Activated B cell treated with CpG ODN at 0.5 μM for 24 hours (primary cell): ENCODE measurements at regions of chr7 and their contacts with region 1.

Region 1: DNA sequence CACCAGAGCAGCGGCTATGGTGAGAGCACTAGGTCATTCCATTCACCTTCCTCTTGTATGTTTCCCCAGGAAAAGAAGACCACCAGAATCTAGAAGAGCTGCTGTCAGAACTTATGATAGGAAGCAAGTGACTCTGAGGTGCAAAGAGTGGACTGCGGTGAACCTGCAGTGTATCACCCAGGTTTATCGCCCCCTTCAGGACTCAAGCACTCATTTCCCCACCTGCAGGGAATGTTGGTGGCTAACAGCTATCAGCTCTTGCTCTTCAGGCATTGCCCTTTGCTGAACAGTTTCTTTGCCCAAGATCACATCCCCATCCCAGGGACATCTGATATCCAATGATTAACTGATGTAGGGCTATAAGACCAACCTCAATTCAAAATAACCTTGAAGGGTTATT is 66.3 kb upstream of the IL6 start:
- DNase-seq: no peak
- ATAC-seq: no peak
- H3K4me3 Mint-ChIP-seq: peak overlapping the region; percentile 80
- H3K27ac Mint-ChIP-seq: peak overlapping the region; percentile 95
- H3K4me1 Mint-ChIP-seq: peaks cover 88% of the 10 kb centered on the region
- H3K27me3 Mint-ChIP-seq: no peaks in the 10 kb centered on the region
- CTCF ChIP-seq: no peak

Region 2: GRCh38 chr7:22559829-22560489 is 100.8 kb before region 1 on chr7:
- CTCF ChIA-PET with region 1: interaction called, 75 read pairs
- POLR2A ChIA-PET with region 1: interaction called, 93 read pairs
- intact Hi-C with region 1: loop called (anchors 1 kb)
- DNase-seq: peak; percentile 43
- ATAC-seq: peak; percentile 80
- H3K4me3 Mint-ChIP-seq: peak overlapping the region; percentile 36
- H3K27ac Mint-ChIP-seq: peak overlapping the region; percentile 70
- H3K4me1 Mint-ChIP-seq: peaks cover 50% of the 10 kb centered on the region
- H3K27me3 Mint-ChIP-seq: no peaks in the 10 kb centered on the region
- CTCF ChIP-seq: peak; percentile 24

Region 3: DNA sequence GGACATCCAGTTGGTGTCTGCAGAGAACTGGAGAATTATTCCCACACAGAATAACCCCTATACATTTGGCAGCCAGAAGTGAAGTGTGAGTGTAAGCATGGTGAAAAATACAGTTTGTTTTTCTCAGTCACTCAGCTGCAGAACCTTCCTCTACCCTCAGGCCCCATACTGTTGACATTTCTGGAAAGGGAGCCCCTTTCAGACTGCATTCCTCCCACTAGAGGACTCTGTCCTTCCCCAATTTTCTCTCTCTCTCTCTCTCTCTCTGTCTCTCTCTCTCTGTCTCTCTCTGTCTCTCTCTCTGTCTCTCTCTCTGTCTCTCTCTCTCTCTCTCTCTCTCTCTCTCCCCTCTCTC is 74.0 kb before region 1 on chr7:
- CTCF ChIA-PET with region 1: interaction called, 6 read pairs
- POLR2A ChIA-PET with region 1: interaction called, 5 read pairs
- intact Hi-C with region 1: loop called (anchors 1 kb)
- DNase-seq: no peak
- ATAC-seq: no peak
- H3K4me3 Mint-ChIP-seq: peak overlapping the region; percentile 67
- H3K27ac Mint-ChIP-seq: peak overlapping the region; percentile 87
- H3K4me1 Mint-ChIP-seq: peaks cover 65% of the 10 kb centered on the region
- H3K27me3 Mint-ChIP-seq: no peaks in the 10 kb centered on the region
- CTCF ChIP-seq: no peak

Region 4: GRCh38 chr7:22697876-22698606 is 37.3 kb after region 1 on chr7:
- CTCF ChIA-PET with region 1: interaction called, 14 read pairs
- POLR2A ChIA-PET with region 1: interaction called, 95 read pairs
- intact Hi-C with region 1: loop called (anchors 1 kb)
- DNase-seq: no peak
- ATAC-seq: peak; percentile 74
- H3K4me3 Mint-ChIP-seq: peak overlapping the region; percentile 61
- H3K27ac Mint-ChIP-seq: peak overlapping the region; percentile 89
- H3K4me1 Mint-ChIP-seq: peaks cover 93% of the 10 kb centered on the region
- H3K27me3 Mint-ChIP-seq: no peaks in the 10 kb centered on the region
- CTCF ChIP-seq: no peak

Region 5: DNA sequence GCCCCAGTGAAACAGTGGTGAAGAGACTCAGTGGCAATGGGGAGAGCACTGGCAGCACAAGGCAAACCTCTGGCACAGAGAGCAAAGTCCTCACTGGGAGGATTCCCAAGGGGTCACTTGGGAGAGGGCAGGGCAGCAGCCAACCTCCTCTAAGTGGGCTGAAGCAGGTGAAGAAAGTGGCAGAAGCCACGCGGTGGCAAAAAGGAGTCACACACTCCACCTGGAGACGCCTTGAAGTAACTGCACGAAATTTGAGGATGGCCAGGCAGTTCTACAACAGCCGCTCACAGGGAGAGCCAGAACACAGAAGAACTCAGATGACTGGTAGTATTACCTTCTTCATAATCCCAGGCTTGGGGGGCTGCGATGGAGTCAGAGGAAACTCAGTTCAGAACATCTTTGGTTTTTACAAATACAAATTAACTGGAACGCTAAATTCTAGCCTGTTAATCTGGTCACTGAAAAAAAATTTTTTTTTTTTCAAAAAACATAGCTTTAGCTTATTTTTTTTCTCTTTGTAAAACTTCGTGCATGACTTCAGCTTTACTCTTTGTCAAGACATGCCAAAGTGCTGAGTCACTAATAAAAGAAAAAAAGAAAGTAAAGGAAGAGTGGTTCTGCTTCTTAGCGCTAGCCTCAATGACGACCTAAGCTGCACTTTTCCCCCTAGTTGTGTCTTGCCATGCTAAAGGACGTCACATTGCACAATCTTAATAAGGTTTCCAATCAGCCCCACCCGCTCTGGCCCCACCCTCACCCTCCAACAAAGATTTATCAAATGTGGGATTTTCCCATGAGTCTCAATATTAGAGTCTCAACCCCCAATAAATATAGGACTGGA is 65.8 kb after region 1 on chr7:
- CTCF ChIA-PET with region 1: interaction called, 110 read pairs
- POLR2A ChIA-PET with region 1: interaction called, 215 read pairs
- intact Hi-C with region 1: loop called (anchors 1 kb)
- DNase-seq: peak; percentile 47
- ATAC-seq: peak; percentile 69
- H3K4me3 Mint-ChIP-seq: peak overlapping the region; percentile 94
- H3K27ac Mint-ChIP-seq: peak overlapping the region; percentile 94
- H3K4me1 Mint-ChIP-seq: peaks cover 88% of the 10 kb centered on the region
- H3K27me3 Mint-ChIP-seq: no peaks in the 10 kb centered on the region
- CTCF ChIP-seq: no peak

Region 6: DNA sequence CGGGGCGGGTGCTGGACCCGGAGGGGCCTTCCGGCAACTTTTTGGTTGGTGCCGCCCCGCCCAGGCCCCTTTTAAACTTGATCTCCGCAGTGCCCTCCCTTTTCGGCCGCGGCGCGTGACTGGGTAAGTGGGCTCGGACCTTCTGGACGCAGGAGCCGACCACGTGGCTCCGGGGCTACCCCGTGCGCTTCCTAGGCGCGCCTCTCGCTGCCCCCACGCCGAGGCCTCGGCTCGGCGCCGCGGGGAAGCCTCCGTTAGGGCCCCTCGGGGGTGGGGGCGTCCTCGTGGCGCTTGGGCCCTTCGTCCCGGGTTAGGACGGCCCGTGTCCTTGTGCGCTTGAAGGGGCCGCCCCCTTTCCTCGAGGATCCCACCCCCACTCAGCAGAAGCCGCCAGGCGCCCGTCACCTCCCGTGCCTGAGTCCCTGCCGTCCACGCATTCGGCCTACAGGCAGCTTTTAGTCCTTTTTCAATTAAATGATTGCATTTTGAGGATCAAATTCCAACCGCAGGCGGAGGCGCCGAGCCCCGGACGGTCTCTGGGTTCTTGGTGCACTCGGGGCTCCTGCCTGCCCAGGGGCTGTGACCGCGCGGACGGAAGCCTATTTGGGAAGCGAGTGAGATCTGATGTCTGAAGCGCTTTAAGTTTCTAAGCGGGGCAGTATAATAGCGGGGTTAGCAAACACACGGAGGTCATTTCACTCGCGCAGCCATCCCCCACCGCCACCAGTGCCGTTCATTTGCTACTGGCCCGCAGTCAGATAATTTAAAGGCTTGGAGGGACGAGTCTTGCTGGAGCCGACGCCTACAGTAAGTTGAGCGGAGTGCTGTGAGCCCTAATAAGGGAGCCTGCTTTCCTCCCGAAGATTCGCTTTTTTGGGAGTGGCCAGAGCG is 193.7 kb after region 1 on chr7:
- CTCF ChIA-PET with region 1: no interaction called
- POLR2A ChIA-PET with region 1: interaction called, 3 read pairs
- intact Hi-C with region 1: loop called (anchors 10 kb)
- DNase-seq: peak; percentile 84
- ATAC-seq: peak; percentile 81
- H3K4me3 Mint-ChIP-seq: peak overlapping the region; percentile 96
- H3K27ac Mint-ChIP-seq: peak overlapping the region; percentile 91
- H3K4me1 Mint-ChIP-seq: peaks cover 54% of the 10 kb centered on the region
- H3K27me3 Mint-ChIP-seq: no peaks in the 10 kb centered on the region
- CTCF ChIP-seq: no peak